ENCODE measurements at regions of chr2 and their contacts with region 1.

Region 1: DNA sequence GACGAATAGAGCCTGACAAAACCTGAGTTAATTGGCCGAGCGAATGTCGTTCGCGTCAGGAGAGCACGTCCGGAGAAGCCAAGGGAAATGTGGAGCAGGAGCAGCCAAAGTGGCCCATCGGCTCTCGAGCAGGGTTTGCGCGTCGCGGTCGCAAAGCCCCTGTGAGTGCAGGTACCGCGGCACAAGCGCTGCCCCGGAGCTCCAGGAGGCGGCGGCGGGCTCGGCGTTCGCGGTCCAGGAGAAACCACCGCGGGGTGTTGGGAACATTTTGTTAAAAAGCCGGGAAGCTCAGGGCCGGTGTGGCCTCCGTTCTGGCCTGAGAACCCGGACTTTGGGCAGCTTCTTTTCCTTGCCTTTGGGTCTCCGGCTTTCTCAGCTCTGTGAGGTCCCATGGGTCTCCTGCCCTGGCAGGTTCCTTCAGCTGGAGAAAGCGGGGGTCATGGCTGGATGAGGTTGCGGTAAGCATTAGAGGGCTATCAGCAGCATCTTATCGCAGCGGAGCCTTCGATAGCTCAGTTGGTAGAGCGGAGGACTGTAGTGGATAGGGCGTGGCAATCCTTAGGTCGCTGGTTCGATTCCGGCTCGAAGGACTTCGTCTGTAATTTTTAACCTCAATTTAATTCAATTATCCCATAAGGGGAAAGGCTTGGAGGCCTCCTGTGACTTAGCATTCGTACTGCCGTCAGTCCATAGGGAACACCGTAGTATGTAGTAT is 1.0 kb upstream of the AGBL5 start:
- DNase-seq: peak; percentile 98
- H3K4me3 ChIP-seq: peak overlapping the region; percentile 66 to 76 (median 73)
- H3K27ac ChIP-seq: peak overlapping the region; percentile 60
- H3K4me1 ChIP-seq: peaks cover 12% of the 10 kb centered on the region
- H3K27me3 ChIP-seq: no peaks in the 10 kb centered on the region
- CTCF ChIP-seq: peak; percentile 18 to 52
- POLR2A ChIP-seq: peak; percentile 96

Region 2: GRCh38 chr2:26901326-26902183 is 148.9 kb before region 1 on chr2:
- CTCF ChIA-PET with region 1: no interaction called
- POLR2A ChIA-PET with region 1: no interaction called
- dilution Hi-C with region 1: no loop called
- intact Hi-C with region 1: no loop called
- DNase-seq: no peak
- H3K4me3 ChIP-seq: no peak overlapping the region
- H3K27ac ChIP-seq: no peak overlapping the region
- H3K4me1 ChIP-seq: no peaks in the 10 kb centered on the region
- H3K27me3 ChIP-seq: peaks cover 11 to 12% of the 10 kb centered on the region in 2 experiments
- CTCF ChIP-seq: no peak
- POLR2A ChIP-seq: no peak

Region 3: DNA sequence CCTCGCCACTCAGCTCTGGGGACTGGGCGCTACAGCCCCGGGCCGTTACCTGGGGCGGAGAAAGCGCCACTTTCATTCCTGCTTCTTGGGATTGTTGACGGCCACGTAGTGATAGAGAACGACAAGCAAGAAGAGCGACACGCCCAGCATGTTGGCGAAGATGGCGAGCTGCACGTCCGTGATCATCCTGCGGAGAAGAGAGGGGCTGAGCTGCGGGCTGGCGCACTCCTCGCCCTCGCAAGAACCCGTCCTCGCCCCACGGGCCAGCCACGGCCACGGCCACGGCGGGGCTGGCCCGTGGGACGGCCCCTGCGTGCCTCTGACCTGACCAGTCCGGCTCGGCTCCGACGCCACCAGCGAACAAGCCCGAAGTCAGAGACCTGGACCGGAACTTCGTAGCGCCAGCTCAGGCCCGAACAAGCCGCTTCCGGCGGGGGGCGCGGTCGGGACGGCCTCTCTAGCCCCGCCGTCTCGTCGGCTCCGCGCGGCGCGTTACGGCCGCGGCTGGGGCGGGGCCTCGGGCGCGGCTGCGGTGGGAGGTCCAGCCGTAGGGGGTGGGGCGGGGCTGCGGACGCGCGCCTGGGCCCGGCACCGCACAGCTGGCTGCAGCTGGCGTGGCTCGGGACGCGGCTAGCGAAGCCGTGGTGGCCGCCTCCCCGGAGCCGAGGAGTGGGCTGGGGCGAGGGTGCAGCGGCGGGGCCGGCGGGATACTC is 21.0 kb after region 1 on chr2 and contains the start of gene OST4:
- CTCF ChIA-PET with region 1: interaction called, 25 read pairs
- POLR2A ChIA-PET with region 1: interaction called, 7 read pairs
- dilution Hi-C with region 1: no loop called
- intact Hi-C with region 1: loop called (anchors 1 kb)
- DNase-seq: peak; percentile 92
- H3K4me3 ChIP-seq: peak within 1 kb of the TSS; percentile 41 to 85 (median 68)
- H3K27ac ChIP-seq: peak within 1 kb of the TSS; percentile 76
- H3K4me1 ChIP-seq: peaks cover 17% of the 10 kb centered on the region
- H3K27me3 ChIP-seq: no peaks in the 10 kb centered on the region
- CTCF ChIP-seq: no peak
- POLR2A ChIP-seq: peak; percentile 93
- total RNA-seq, gene OST4: 415 TPM in 2 replicates